ENCODE measurements at regions of chr14 and their contacts with region 1.

Region 1: GRCh38 chr14:100285021-100285912 is 21.0 kb downstream of the SLC25A29 start:
- DNase-seq: no peak
- H3K4me3 ChIP-seq: peak overlapping the region; percentile 66
- H3K27ac ChIP-seq: peak overlapping the region; percentile 39
- H3K27me3 ChIP-seq: no peaks in the 10 kb centered on the region
- CTCF ChIP-seq: peak; percentile 79

Region 2: GRCh38 chr14:100275214-100275613 is 10.1 kb before region 1 on chr14:
- CTCF ChIA-PET with region 1: interaction called, 23 read pairs
- POLR2A ChIA-PET with region 1: no interaction called
- DNase-seq: no peak
- H3K4me3 ChIP-seq: no peak overlapping the region
- H3K27ac ChIP-seq: no peak overlapping the region
- H3K27me3 ChIP-seq: no peaks in the 10 kb centered on the region
- CTCF ChIP-seq: no peak

Region 3: GRCh38 chr14:100297302-100298300 is 12.3 kb after region 1 on chr14:
- CTCF ChIA-PET with region 1: interaction called, 40 read pairs
- POLR2A ChIA-PET with region 1: interaction called, 4 read pairs
- DNase-seq: peak; percentile 67
- H3K4me3 ChIP-seq: peak overlapping the region; percentile 20
- H3K27ac ChIP-seq: peak overlapping the region; percentile 89
- H3K27me3 ChIP-seq: no peaks in the 10 kb centered on the region
- CTCF ChIP-seq: no peak

Region 4: GRCh38 chr14:100303177-100303576 is 17.9 kb after region 1 on chr14:
- CTCF ChIA-PET with region 1: interaction called, 40 read pairs
- POLR2A ChIA-PET with region 1: no interaction called
- DNase-seq: no peak
- H3K4me3 ChIP-seq: no peak overlapping the region
- H3K27ac ChIP-seq: no peak overlapping the region
- H3K27me3 ChIP-seq: no peaks in the 10 kb centered on the region
- CTCF ChIP-seq: peak; percentile 78

Measured in AG04450 (cell line).